ENCODE measurements at regions of chr3 and their contacts with region 1.

Region 1: GRCh38 chr3:192444096-192444790 is 283.1 kb downstream of the FGF12 start:
- DNase-seq: peak; percentile 41 to 66
- ATAC-seq: peak; percentile 67 to 84 (median 73)
- H3K4me3 ChIP-seq: no peak overlapping the region
- H3K27ac ChIP-seq: no peak overlapping the region
- H3K4me1 ChIP-seq: no peaks in the 10 kb centered on the region
- H3K27me3 ChIP-seq: peaks cover 0 to 10% (median 0%) of the 10 kb centered on the region in 3 donors
- CTCF ChIP-seq: peak; percentile 97

Region 2: DNA sequence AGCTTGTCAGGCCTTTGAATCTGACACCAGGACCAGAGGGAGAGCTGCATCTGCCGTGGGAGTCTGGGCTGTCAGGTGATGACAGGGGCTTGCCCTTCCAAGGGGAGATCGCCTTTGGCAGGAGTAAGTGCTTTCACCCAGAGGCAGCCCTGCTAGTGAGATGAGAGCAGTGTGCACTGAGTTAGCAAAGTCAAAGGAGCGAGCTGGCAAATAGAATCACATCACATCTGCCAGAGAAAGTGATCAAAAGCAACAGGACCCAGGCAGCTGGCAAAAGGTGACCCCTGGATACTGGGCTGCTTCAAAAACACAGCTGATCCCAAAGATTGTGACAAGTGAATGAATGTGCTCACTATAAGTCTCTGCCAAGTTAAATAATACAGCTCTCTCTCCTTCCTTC is 1019.4 kb before region 1 on chr3:
- intact Hi-C with region 1: loop called in 1 of 2 experiments (anchors 5 kb)
- DNase-seq: no peak
- ATAC-seq: no peak
- H3K4me3 ChIP-seq: no peak overlapping the region
- H3K27ac ChIP-seq: no peak overlapping the region
- H3K4me1 ChIP-seq: no peaks in the 10 kb centered on the region
- H3K27me3 ChIP-seq: peaks cover 0 to under 1% (median 0%) of the 10 kb centered on the region in 3 donors
- CTCF ChIP-seq: no peak

Region 3: DNA sequence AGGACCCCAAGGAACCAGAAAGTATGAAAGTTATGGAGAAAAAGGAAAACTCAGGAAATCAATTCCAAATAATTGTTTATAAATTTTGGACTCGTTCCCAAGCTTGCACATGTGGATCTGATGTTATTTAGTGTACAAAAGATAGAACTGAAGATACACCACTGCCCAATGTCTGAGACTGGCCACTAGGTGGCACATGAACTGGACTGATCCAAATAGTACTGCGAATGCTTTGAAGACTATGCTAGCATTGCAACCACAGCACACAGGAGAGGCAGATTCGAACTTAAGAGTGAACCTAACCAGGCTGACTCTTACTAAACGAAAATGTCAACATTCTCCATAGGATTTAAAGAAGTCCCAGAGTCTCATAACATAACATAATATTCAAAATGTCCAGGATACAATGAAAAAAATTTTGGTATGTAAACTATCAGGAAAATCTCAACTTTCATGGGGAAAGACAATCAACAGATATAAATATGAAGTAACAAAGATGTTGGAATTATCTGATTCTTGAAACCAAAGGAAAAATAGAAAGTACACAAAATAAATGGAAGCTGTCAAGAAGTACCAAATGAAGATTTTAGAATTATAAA is 313.6 kb before region 1 on chr3:
- intact Hi-C with region 1: loop called (anchors 1 to 5 kb)
- DNase-seq: peak; percentile 16 to 37
- ATAC-seq: peak in 3 of 4 donors; percentile 53 to 73 (median 63)
- H3K4me3 ChIP-seq: no peak overlapping the region
- H3K27ac ChIP-seq: no peak overlapping the region
- H3K4me1 ChIP-seq: no peaks in the 10 kb centered on the region
- H3K27me3 ChIP-seq: no peaks in the 10 kb centered on the region
- CTCF ChIP-seq: peak; percentile 67